Activated naive CD8-positive, alpha-beta T cell treated with anti-CD3 and anti-CD28 coated beads, Interleukin-2, amount 10 ng/mL, durations not matched to agents 7 days and 5 days (primary cell): ENCODE measurements at regions of chr9 and their contacts with region 1.

Region 1: GRCh38 chr9:122816163-122816867 is 12.1 kb downstream of the PDCL start:
- DNase-seq: peak; percentile 60
- ATAC-seq: peak; percentile 99
- H3K4me3 Mint-ChIP-seq: peak overlapping the region; percentile 77
- H3K27ac Mint-ChIP-seq: peak overlapping the region; percentile 88
- H3K4me1 Mint-ChIP-seq: peaks cover 18% of the 10 kb centered on the region
- H3K27me3 Mint-ChIP-seq: no peaks in the 10 kb centered on the region

Region 2: GRCh38 chr9:122827761-122828093 is 11.4 kb after region 1 on chr9:
- POLR2A ChIA-PET with region 1: interaction called, 11 read pairs
- DNase-seq: no peak
- ATAC-seq: peak; percentile 2
- H3K4me3 Mint-ChIP-seq: peak overlapping the region; percentile 100
- H3K27ac Mint-ChIP-seq: peak overlapping the region; percentile 95
- H3K4me1 Mint-ChIP-seq: peaks cover 30% of the 10 kb centered on the region
- H3K27me3 Mint-ChIP-seq: no peaks in the 10 kb centered on the region